Left ventricle myocardium superior (tissue), 1 donor: ENCODE measurements at regions of chr14 and their contacts with region 1.

Region 1: DNA sequence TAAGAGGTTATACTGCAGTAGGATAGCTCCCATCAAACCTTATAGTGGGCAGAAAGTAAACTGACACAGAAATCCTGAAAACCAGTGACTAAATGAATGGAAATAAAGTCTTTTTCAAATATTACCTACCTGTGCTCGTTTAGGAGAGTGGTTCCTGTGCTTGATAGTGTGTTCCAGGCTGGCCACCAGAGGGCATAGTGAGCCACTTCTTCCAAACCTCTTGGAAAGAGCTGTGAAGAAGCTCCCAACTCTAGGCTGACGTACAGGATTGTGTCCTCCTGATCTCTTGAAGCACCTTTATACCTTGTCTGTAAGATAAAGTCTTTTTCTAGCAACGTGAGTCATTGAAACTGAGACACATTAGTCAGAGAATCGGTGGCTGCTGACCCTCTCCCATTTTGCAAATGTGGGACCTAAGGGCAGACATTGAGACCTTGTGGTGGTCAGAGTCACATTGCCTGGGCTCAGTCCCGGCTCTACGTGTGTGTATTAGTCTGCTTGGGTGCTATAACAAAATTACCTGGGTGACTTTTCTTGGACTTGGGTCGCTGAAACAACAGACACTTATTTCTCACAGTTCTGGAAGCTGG is 17.6 kb downstream of the TDP1 start:
- DNase-seq: peak; percentile 73
- ATAC-seq: peak; percentile 86

Region 2: DNA sequence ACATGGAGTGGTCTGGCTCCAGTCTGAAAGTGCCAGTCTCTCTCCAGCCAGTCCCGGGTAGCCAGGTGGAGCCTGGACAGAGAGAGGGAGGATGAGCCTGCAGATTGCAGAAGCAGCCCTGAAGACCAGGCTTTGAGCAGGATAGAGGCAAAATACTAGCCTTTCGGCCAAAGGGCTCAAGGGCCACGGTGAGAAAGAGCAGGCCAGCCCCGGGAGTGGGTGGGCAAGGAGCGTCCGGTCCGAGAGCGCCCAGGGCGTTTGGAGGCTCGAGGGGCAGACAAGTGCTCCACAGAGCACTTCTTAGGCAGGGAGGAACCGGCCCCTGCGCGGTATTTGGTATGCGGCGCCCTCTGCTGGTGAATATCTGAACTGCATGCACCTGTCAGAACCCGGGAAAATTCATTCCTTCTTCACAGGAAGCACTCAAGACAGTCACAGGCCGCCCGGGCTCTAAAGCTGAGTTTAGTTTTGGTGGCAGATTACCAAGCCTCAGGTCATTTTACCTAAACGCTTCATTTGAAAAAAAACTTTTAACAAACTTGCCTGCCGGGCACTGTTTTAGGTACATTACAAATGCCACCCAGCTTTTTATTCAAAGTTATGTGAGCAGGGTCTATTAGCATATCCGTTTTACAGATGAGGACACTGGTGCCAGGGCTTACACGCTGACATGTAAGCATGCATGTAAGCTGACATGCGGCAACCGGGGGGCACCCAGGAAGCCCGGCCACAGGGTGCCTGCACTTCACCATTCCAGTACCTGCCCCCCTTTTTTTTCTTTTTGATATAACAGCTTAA is 262.0 kb after region 1 on chr14:
- intact Hi-C with region 1: loop called (anchors 5 kb)
- DNase-seq: peak; percentile 71
- ATAC-seq: peak; percentile 83

Region 3: GRCh38 chr14:90454041-90455000 is 481.0 kb after region 1 on chr14:
- intact Hi-C with region 1: no loop called
- DNase-seq: peak; percentile 80
- ATAC-seq: peak; percentile 94

Region 4: DNA sequence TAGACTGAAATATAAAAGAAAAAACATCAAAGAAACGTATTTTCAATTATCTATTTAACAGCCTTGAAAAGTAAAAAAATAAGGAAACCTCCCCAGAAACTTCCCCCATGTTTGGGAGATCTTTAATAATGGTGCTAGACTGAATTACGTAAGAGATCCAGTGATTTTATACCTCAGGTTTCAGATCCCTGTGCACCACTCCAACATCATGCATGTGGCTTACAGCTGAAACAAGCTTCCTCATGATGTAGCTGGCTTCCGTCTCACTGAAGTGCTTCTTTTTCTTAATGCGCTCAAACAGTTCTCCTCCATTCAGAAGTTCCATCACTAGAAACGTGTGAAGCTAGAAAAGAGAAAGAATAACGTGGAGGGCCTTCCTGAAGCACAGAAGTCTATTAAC is 920.9 kb after region 1 on chr14:
- intact Hi-C with region 1: loop called (anchors 10 kb)
- DNase-seq: no peak
- ATAC-seq: no peak